ENCODE measurements at regions of chr12 and their contacts with region 1.

Region 1: DNA sequence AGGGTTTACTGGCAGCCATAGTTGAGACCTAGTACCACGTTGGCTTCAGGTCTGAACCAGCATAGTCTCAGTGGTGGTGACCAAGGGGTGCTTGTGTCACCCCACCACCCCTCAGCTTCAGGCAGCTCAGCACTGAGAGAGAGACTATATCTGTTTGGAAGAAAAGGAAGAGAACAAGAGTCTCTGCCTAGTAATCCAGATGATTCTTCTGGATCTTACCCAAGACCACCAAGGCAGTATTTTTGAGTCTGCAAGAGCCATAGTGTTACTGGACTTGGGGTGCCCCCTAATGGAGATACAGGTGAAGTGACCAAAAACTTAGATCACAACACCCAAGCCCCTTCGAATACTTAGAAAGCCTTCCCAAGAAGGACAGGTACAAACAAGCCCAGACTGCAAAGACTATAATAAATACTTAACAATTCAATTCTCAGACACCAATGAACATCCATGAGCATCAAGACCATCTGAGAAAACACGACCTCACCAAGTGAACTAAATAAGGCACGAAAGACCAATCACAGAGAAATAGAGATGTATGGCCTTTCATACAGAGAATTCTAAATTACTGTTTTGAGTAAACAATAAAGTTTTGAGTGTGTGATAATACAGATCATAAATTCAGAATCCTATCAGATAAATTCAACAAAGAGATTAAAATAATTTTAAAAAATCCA is 107.0 kb downstream of the HELB start:
- DNase-seq: no peak
- ATAC-seq: peak; percentile 39

Region 2: GRCh38 chr12:66144791-66145754 is 264.3 kb before region 1 on chr12:
- intact Hi-C with region 1: loop called (anchors 10 kb)
- DNase-seq: no peak
- ATAC-seq: peak; percentile 84

Region 3: DNA sequence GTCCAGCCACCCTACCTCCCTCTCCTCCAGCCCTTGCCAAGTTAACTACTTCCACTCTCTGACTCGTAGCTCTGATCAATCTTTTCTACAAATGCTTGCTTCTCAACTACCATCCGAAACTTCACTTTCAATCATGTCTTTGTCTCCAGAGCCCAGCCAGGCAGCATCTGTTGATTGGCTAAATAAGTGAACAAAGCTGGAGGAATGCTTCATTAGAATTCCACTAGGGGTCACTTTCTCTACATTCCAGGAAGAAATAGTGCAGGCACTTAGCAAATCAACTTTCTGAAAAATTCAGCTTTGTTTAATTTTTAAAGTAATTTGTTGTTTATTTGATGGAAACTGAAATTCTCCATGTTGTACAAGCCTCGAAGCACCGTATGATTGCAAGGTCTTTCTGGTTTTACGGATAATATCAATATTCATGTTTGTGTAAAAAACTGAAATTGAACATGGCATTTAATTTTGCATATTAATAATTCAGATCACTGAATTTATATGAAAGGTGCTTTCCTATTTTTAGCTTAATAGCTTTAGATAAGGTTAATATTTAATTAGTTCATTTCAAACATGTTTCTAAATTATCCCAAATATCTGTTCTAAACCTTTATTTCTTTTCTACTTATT is 139.5 kb before region 1 on chr12:
- intact Hi-C with region 1: loop called (anchors 5 kb)
- DNase-seq: no peak
- ATAC-seq: no peak

Region 4: GRCh38 chr12:66280561-66280960 is 128.8 kb before region 1 on chr12:
- intact Hi-C with region 1: no loop called
- DNase-seq: no peak
- ATAC-seq: no peak

Region 5: GRCh38 chr12:66352197-66352596 is 57.1 kb before region 1 on chr12:
- intact Hi-C with region 1: loop called (anchors 5 kb)
- DNase-seq: no peak
- ATAC-seq: no peak

Region 6: GRCh38 chr12:66717036-66717673 is 307.8 kb after region 1 on chr12:
- intact Hi-C with region 1: no loop called
- DNase-seq: no peak
- ATAC-seq: no peak